GM12878 (cell line): ENCODE measurements at regions of chr6 and their contacts with region 1.

Region 1: GRCh38 chr6:38034274-38034914 is 214.9 kb downstream of the ZFAND3 start:
- DNase-seq: no peak
- ATAC-seq: peak; percentile 49; the same call in 2 of the 3 replicates
- H3K4me3 ChIP-seq: no peak overlapping the region
- H3K27ac ChIP-seq: no peak overlapping the region
- H3K4me1 ChIP-seq: peaks cover 12% of the 10 kb centered on the region; the same call in 1 of the 2 replicates
- H3K27me3 ChIP-seq: no peaks in the 10 kb centered on the region
- CTCF ChIP-seq: peak; percentile 26 to 49 (median 43); a peak in 4 of 6 replicates
- EP300 ChIP-seq: no peak
- POLR2A ChIP-seq: no peak
- RAD21 ChIP-seq: peak; percentile 54

Region 2: DNA sequence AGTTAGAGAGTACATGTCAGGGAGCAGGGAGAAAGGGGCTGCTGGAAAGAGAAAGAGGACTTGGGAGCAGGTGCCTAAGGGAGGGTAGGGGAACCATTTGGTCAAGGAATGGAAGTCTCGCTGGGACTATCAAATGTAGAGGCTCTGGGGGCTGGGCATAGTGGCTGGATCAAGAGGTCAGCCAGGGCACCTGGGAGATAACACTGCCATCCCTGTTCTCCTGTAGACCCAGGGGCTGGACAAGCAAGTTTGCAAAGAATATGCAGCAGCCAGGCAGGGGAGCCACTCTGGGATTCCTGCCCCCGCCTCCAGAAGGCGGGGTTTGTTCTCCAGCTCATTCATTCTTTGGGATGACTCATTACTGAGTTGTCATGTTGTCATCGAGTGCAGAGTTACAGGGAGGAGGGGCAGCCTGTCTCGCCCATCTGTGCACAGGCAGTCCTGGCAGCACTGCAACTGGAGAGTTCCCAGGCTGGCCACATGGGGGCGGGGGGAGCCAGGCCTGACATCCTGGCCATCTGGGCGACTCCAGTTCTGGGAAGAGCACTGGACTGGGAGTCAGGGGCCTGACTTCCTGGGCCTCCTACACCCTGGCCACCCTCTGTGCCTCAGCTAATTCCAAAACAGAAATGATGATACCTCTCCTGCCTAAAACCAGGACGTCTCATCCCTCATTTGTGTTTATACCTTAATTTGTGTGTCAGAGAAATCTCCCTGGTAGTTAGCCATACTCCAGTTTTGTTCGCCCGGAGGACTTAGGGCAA is 243.1 kb before region 1 on chr6:
- CTCF ChIA-PET with region 1: interaction called, 11 read pairs
- POLR2A ChIA-PET with region 1: no interaction called
- RAD21 ChIA-PET with region 1: interaction called, 3 read pairs
- SMC1A ChIA-PET with region 1: interaction called, 4 read pairs
- in situ Hi-C with region 1: no loop called
- intact Hi-C with region 1: no loop called
- DNase-seq: peak; percentile 53
- ATAC-seq: peak; percentile 100
- H3K4me3 ChIP-seq: no peak overlapping the region
- H3K27ac ChIP-seq: no peak overlapping the region
- H3K4me1 ChIP-seq: no peaks in the 10 kb centered on the region
- H3K27me3 ChIP-seq: no peaks in the 10 kb centered on the region
- CTCF ChIP-seq: peak; percentile 92 to 98 (median 95)
- EP300 ChIP-seq: no peak
- POLR2A ChIP-seq: no peak
- RAD21 ChIP-seq: peak; percentile 89

Region 3: GRCh38 chr6:38018755-38019165 is 15.6 kb before region 1 on chr6:
- CTCF ChIA-PET with region 1: interaction called, 42 read pairs
- POLR2A ChIA-PET with region 1: interaction called, 4 read pairs
- RAD21 ChIA-PET with region 1: interaction called, 9 read pairs
- SMC1A ChIA-PET with region 1: interaction called, 60 read pairs
- in situ Hi-C with region 1: no loop called
- intact Hi-C with region 1: no loop called
- DNase-seq: no peak
- ATAC-seq: no peak
- H3K4me3 ChIP-seq: no peak overlapping the region
- H3K27ac ChIP-seq: no peak overlapping the region
- H3K4me1 ChIP-seq: no peaks in the 10 kb centered on the region
- H3K27me3 ChIP-seq: no peaks in the 10 kb centered on the region
- CTCF ChIP-seq: 0 out of 6 replicates have a peak, but pooled peaks of 1 of the 3 experiments have one; percentile 1
- EP300 ChIP-seq: no peak
- POLR2A ChIP-seq: no peak
- RAD21 ChIP-seq: no peak

Region 4: GRCh38 chr6:38068854-38069590 is 34.6 kb after region 1 on chr6:
- CTCF ChIA-PET with region 1: interaction called, 17 read pairs
- POLR2A ChIA-PET with region 1: no interaction called
- RAD21 ChIA-PET with region 1: interaction called, 3 read pairs
- SMC1A ChIA-PET with region 1: interaction called, 8 read pairs
- in situ Hi-C with region 1: no loop called
- intact Hi-C with region 1: no loop called
- DNase-seq: no peak
- ATAC-seq: no peak
- H3K4me3 ChIP-seq: no peak overlapping the region
- H3K27ac ChIP-seq: no peak overlapping the region
- H3K4me1 ChIP-seq: peaks cover 3% of the 10 kb centered on the region; the same call in 1 of the 2 replicates
- H3K27me3 ChIP-seq: no peaks in the 10 kb centered on the region
- CTCF ChIP-seq: no peak
- EP300 ChIP-seq: no peak
- POLR2A ChIP-seq: no peak
- RAD21 ChIP-seq: no peak

Region 5: GRCh38 chr6:38086346-38086745 is 52.0 kb after region 1 on chr6:
- CTCF ChIA-PET with region 1: no interaction called
- POLR2A ChIA-PET with region 1: no interaction called
- RAD21 ChIA-PET with region 1: no interaction called
- SMC1A ChIA-PET with region 1: no interaction called
- in situ Hi-C with region 1: no loop called
- intact Hi-C with region 1: no loop called
- DNase-seq: no peak
- ATAC-seq: no peak
- H3K4me3 ChIP-seq: no peak overlapping the region
- H3K27ac ChIP-seq: no peak overlapping the region
- H3K4me1 ChIP-seq: no peaks in the 10 kb centered on the region
- H3K27me3 ChIP-seq: no peaks in the 10 kb centered on the region
- CTCF ChIP-seq: no peak
- EP300 ChIP-seq: no peak
- POLR2A ChIP-seq: no peak
- RAD21 ChIP-seq: no peak

Region 6: GRCh38 chr6:38134704-38135088 is 100.3 kb after region 1 on chr6:
- CTCF ChIA-PET with region 1: no interaction called
- POLR2A ChIA-PET with region 1: no interaction called
- RAD21 ChIA-PET with region 1: no interaction called
- SMC1A ChIA-PET with region 1: no interaction called
- in situ Hi-C with region 1: no loop called
- intact Hi-C with region 1: no loop called
- DNase-seq: no peak
- ATAC-seq: no peak
- H3K4me3 ChIP-seq: no peak overlapping the region
- H3K27ac ChIP-seq: no peak overlapping the region
- H3K4me1 ChIP-seq: no peaks in the 10 kb centered on the region
- H3K27me3 ChIP-seq: no peaks in the 10 kb centered on the region
- CTCF ChIP-seq: no peak
- EP300 ChIP-seq: no peak
- POLR2A ChIP-seq: no peak
- RAD21 ChIP-seq: no peak

Region 7: DNA sequence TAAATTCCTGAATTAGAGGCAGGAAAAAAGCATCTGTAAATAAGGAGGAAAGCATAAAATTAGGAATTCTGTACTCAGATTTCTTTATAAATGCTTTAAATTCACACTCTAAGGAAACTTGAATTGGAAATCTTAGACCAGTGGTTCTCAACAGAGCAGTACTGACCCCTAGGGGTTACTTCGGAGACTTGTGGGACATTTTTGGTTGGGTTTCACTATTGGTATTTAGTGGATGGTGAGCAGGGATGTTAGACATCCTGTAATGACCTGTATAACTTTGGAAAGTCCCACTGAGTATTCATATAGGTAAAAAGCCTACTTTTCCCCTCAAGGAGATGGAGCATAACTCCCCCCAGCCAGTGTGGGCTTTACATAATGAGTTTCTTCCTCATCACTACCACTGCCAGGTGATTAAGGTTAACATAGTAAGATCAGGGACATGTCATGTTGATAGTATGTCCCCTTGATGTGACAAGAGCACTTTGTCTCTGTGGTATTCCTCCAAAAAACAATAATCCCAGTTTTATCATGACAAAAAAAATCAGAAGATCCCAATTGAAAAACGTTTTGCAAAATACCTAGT is 637.6 kb after region 1 on chr6:
- CTCF ChIA-PET with region 1: no interaction called
- POLR2A ChIA-PET with region 1: no interaction called
- RAD21 ChIA-PET with region 1: no interaction called
- SMC1A ChIA-PET with region 1: interaction called, 4 read pairs
- in situ Hi-C with region 1: no loop called
- intact Hi-C with region 1: loop called (anchors 10 kb)
- DNase-seq: peak; percentile 55
- ATAC-seq: peak; percentile 91
- H3K4me3 ChIP-seq: no peak overlapping the region
- H3K27ac ChIP-seq: no peak overlapping the region
- H3K4me1 ChIP-seq: peaks cover 18% of the 10 kb centered on the region
- H3K27me3 ChIP-seq: no peaks in the 10 kb centered on the region
- CTCF ChIP-seq: peak; percentile 70 to 84 (median 81)
- EP300 ChIP-seq: no peak
- POLR2A ChIP-seq: no peak
- RAD21 ChIP-seq: peak; percentile 86